CD14-positive monocyte (primary cell): ENCODE measurements at regions of chr22 and their contacts with region 1.

Region 1: DNA sequence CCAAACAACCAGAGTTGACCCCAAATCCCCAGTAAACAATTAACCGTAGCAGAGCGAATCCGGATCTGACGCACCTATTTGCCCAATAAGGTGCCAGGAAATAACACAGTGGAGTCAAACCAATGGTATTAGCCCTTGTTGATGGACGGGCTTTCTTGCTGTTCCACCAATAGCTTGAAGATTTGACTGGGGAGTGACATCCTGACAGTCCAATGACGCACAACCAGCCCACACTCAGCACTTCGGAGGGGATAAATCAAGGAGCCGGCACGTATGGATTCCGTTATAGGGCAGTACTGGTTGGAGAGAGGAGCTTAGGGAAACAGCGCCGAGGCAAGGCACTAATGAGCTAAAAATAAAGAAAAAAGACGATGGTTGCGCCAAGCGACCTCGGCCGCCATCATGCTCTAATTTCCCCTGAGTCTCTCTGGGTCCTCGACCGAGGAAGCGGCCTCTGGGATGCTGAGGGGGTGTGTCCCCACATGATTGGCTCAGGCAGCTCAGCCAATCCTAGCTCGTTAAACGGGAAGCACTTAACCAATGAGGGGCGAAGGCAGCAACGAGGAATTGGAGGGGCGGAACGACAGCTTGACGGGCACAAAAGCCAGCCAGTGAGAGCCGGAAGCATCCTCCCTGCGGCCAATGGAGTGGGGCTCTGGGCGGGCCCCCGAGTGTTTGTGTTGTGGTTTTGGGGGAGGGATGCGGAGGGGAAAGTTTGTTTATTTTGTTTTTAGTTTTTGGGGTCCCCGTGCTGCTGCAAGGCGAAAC is 49.5 kb downstream of the FAM83F start:
- DNase-seq: peak; percentile 98 to 99 (median 99)
- H3K4me3 ChIP-seq: peak overlapping the region; percentile 59 to 95 (median 88)
- H3K4me3 Mint-ChIP-seq: peak overlapping the region; percentile 99
- H3K27ac ChIP-seq: peak overlapping the region; percentile 86 to 99
- H3K27ac Mint-ChIP-seq: peak overlapping the region; percentile 98 to 100 (median 99)
- H3K4me1 ChIP-seq: peaks cover 31 to 41% of the 10 kb centered on the region in 2 donors
- H3K4me1 Mint-ChIP-seq: peaks cover 43% of the 10 kb centered on the region
- H3K27me3 ChIP-seq: no peaks in the 10 kb centered on the region
- H3K27me3 Mint-ChIP-seq: peaks cover 0 to 6% (median 2%) of the 10 kb centered on the region in 3 donors
- CTCF ChIP-seq: no peak

Region 2: GRCh38 chr22:39319270-39320022 is 724.8 kb before region 1 on chr22 and contains the start of gene RPL3:
- intact Hi-C with region 1: loop called in 1 of 2 experiments (anchors 10 kb)
- DNase-seq: peak; percentile 95 to 99 (median 98)
- H3K4me3 ChIP-seq: peak within 1 kb of the TSS; percentile 80 to 95 (median 93)
- H3K4me3 Mint-ChIP-seq: peak within 1 kb of the TSS; percentile 98 to 99
- H3K27ac ChIP-seq: peak within 1 kb of the TSS; percentile 94 to 96
- H3K27ac Mint-ChIP-seq: peak within 1 kb of the TSS; percentile 95 to 99 (median 99)
- H3K4me1 ChIP-seq: peaks cover 26 to 42% of the 10 kb centered on the region in 2 donors
- H3K4me1 Mint-ChIP-seq: peaks cover 37% of the 10 kb centered on the region
- H3K27me3 ChIP-seq: no peaks in the 10 kb centered on the region
- H3K27me3 Mint-ChIP-seq: peaks cover 0 to 3% (median 2%) of the 10 kb centered on the region in 3 donors
- CTCF ChIP-seq: no peak
- polyA plus RNA-seq, gene RPL3: 604 to 2,104 (median 698) TPM

Region 3: DNA sequence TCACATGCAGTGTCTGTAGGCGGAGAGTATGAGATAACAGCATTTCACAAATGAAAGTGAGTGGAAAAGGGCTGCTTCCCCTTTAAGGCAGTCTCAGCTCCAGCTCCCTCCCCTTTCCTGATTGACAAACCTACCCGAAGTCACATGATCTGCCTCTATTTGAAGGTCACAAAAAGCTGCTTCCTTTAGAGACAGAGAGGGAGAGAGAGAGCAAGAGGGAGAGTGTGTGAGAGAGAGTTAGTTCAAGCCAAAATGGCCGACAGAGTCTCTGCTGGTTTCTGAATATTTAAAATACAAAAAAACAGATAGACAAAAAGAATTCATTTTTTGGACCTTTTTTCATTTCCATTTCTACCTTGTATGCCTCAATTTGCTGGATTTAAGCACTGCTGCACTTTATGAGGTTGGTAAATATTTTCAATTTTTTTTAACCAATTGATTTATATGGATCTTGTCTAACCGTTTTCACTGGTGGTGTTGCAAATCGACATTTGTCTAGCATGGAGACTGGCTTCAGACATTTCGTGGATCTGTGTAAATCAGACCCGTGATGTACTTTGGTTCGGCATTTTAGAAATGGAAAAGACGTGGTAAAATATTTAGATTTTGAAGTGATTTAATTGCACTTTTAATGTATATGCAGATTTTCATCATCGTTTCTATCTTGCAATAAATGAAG is 133.6 kb after region 1 on chr22 and contains the start of gene TNRC6B:
- intact Hi-C with region 1: loop called in 1 of 2 experiments (anchors 2 kb)
- DNase-seq: peak; percentile 92 to 96 (median 96)
- H3K4me3 ChIP-seq: peak within 1 kb of the TSS; percentile 75 to 100 (median 92)
- H3K4me3 Mint-ChIP-seq: peak within 1 kb of the TSS; percentile 80 to 97
- H3K27ac ChIP-seq: peak within 1 kb of the TSS; percentile 39 to 88
- H3K27ac Mint-ChIP-seq: peak within 1 kb of the TSS; percentile 83 to 93 (median 90)
- H3K4me1 ChIP-seq: peaks cover 47 to 56% of the 10 kb centered on the region in 2 donors
- H3K4me1 Mint-ChIP-seq: peaks cover 54% of the 10 kb centered on the region
- H3K27me3 ChIP-seq: no peaks in the 10 kb centered on the region
- H3K27me3 Mint-ChIP-seq: no peaks in the 10 kb centered on the region
- CTCF ChIP-seq: no peak
- polyA plus RNA-seq, gene TNRC6B: 7.2 to 16.5 (median 11.8) TPM

Region 4: DNA sequence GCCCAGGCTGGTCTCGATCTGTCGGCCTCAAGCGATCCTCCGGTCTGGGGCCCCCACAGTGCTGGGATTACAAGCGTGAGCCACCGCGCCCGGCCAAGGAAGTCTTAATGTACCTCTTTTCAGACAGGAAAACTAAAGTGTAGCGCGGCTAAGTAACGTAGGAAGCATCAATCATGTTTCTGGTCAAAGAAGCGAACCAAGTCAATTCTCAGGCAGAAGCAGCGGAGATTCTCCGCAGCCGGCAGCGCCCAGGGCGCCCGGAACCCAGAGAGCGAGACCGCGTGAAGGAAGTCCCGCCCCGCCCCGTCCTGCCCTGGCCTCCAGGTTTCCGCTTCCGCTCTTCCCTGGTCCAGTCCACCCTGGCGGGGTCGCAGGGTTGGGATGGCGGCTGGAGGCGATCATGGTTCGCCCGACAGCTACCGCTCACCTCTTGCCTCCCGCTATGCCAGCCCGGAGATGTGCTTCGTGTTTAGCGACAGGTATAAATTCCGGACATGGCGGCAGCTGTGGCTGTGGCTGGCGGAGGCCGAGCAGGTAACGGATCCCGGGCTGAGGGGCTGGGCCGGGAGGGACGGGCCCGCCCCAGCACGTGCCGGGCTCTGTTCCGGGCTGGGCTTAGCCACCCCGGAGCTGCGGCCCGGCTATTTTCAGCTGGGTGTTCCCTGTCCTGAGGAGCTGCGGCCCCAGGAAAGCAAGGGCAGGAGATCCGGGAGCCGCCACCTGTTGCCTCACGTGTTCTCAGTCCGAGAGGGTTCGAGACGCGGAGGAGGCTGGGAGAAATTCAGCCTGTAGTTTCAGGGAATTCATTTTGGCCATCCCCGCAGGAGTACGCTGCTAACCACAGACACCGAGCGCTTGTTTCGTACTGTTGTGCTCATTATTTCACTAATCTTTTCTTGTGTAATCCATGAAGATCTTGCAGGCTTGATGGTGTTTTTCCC is 302.2 kb after region 1 on chr22 and contains the start of gene ADSL:
- intact Hi-C with region 1: loop called (anchors 10 kb)
- DNase-seq: peak; percentile 71 to 78 (median 72)
- H3K4me3 ChIP-seq: peak within 1 kb of the TSS; percentile 78 to 89 (median 86)
- H3K4me3 Mint-ChIP-seq: peak within 1 kb of the TSS; percentile 94 to 97
- H3K27ac ChIP-seq: peak within 1 kb of the TSS; percentile 71 to 83
- H3K27ac Mint-ChIP-seq: peak within 1 kb of the TSS; percentile 89 to 97 (median 95)
- H3K4me1 ChIP-seq: peaks cover 25 to 40% of the 10 kb centered on the region in 2 donors
- H3K4me1 Mint-ChIP-seq: peaks cover 39% of the 10 kb centered on the region
- H3K27me3 ChIP-seq: no peaks in the 10 kb centered on the region
- H3K27me3 Mint-ChIP-seq: peaks cover 0 to 4% (median 3%) of the 10 kb centered on the region in 3 donors
- CTCF ChIP-seq: no peak
- polyA plus RNA-seq, gene ADSL: 56.7 to 82.3 (median 65.1) TPM